GM12878 (cell line): ENCODE measurements at regions of chr12 and their contacts with region 1.

Region 1: GRCh38 chr12:26097046-26097878 is 27.6 kb downstream of the BHLHE41 start:
- DNase-seq: no peak
- ATAC-seq: peak; percentile 97
- H3K4me3 ChIP-seq: no peak overlapping the region
- H3K27ac ChIP-seq: no peak overlapping the region
- H3K4me1 ChIP-seq: no peaks in the 10 kb centered on the region
- H3K27me3 ChIP-seq: peaks cover 0 to 13% of the 10 kb centered on the region in 2 experiments; a peak in 2 of 4 replicates
- CTCF ChIP-seq: peak; percentile 93 to 94 (median 94)
- EP300 ChIP-seq: no peak
- POLR2A ChIP-seq: no peak
- RAD21 ChIP-seq: peak; percentile 91

Region 2: GRCh38 chr12:26113853-26114719 is 16.8 kb after region 1 on chr12:
- CTCF ChIA-PET with region 1: interaction called, 63 read pairs
- POLR2A ChIA-PET with region 1: interaction called, 3 read pairs
- RAD21 ChIA-PET with region 1: interaction called, 19 read pairs
- SMC1A ChIA-PET with region 1: interaction called, 29 read pairs
- in situ Hi-C with region 1: no loop called
- intact Hi-C with region 1: no loop called
- DNase-seq: no peak
- ATAC-seq: peak; percentile 95
- H3K4me3 ChIP-seq: peak overlapping the region; percentile 73; the same call in 1 of the 2 replicates
- H3K27ac ChIP-seq: no peak overlapping the region
- H3K4me1 ChIP-seq: peaks cover 17% of the 10 kb centered on the region
- H3K27me3 ChIP-seq: peaks cover 0 to 15% of the 10 kb centered on the region in 2 experiments; a peak in 1 of 4 replicates
- CTCF ChIP-seq: peak in 2 of 3 experiments; percentile 20 to 29; a peak in 3 of 6 replicates
- EP300 ChIP-seq: no peak
- POLR2A ChIP-seq: peak; percentile 68
- RAD21 ChIP-seq: no peak

Region 3: DNA sequence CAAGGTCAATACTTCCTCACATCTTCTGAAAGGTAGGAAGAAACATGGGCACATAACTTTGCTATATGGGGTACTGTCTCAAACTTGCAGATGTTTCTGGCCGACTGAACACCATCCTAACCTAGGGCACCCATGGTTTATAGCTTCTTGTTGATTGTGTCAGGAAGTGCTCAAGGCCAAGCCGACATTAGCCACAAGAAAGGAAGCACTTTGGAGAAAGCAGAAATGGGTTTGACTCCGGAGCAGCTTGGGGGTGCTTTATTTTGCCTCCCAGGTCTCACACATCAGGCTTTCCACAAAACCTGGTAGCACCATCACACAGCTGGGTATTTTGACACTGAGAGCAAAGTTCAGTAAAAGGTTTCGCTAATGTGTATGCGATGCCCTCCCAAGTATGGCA is 52.7 kb after region 1 on chr12:
- CTCF ChIA-PET with region 1: no interaction called
- POLR2A ChIA-PET with region 1: no interaction called
- RAD21 ChIA-PET with region 1: no interaction called
- SMC1A ChIA-PET with region 1: no interaction called
- in situ Hi-C with region 1: no loop called
- intact Hi-C with region 1: no loop called
- DNase-seq: no peak
- ATAC-seq: no peak
- H3K4me3 ChIP-seq: no peak overlapping the region
- H3K27ac ChIP-seq: no peak overlapping the region
- H3K4me1 ChIP-seq: peaks cover 5% of the 10 kb centered on the region; the same call in 1 of the 2 replicates
- H3K27me3 ChIP-seq: peaks cover 0 to 4% of the 10 kb centered on the region in 2 experiments; a peak in 1 of 4 replicates
- CTCF ChIP-seq: no peak
- EP300 ChIP-seq: no peak
- POLR2A ChIP-seq: no peak
- RAD21 ChIP-seq: no peak

Region 4: GRCh38 chr12:26523708-26524150 is 426.5 kb after region 1 on chr12:
- CTCF ChIA-PET with region 1: interaction called, 10 read pairs
- POLR2A ChIA-PET with region 1: no interaction called
- RAD21 ChIA-PET with region 1: no interaction called
- SMC1A ChIA-PET with region 1: interaction called, 5 read pairs
- in situ Hi-C with region 1: no loop called
- intact Hi-C with region 1: loop called (anchors 5 kb)
- DNase-seq: no peak
- ATAC-seq: no peak
- H3K4me3 ChIP-seq: no peak overlapping the region
- H3K27ac ChIP-seq: no peak overlapping the region
- H3K4me1 ChIP-seq: peaks cover 2% of the 10 kb centered on the region; the same call in 1 of the 2 replicates
- H3K27me3 ChIP-seq: no peaks in the 10 kb centered on the region
- CTCF ChIP-seq: no peak
- EP300 ChIP-seq: no peak
- POLR2A ChIP-seq: no peak
- RAD21 ChIP-seq: no peak

Region 5: GRCh38 chr12:26614020-26614616 is 516.9 kb after region 1 on chr12:
- CTCF ChIA-PET with region 1: interaction called, 13 read pairs
- POLR2A ChIA-PET with region 1: no interaction called
- RAD21 ChIA-PET with region 1: interaction called, 3 read pairs
- SMC1A ChIA-PET with region 1: interaction called, 5 read pairs
- in situ Hi-C with region 1: no loop called
- intact Hi-C with region 1: loop called (anchors 10 kb)
- DNase-seq: no peak
- ATAC-seq: peak; percentile 57
- H3K4me3 ChIP-seq: no peak overlapping the region
- H3K27ac ChIP-seq: no peak overlapping the region
- H3K4me1 ChIP-seq: no peaks in the 10 kb centered on the region
- H3K27me3 ChIP-seq: no peaks in the 10 kb centered on the region
- CTCF ChIP-seq: peak; percentile 42 to 52 (median 52)
- EP300 ChIP-seq: no peak
- POLR2A ChIP-seq: no peak
- RAD21 ChIP-seq: peak; percentile 46

Region 6: DNA sequence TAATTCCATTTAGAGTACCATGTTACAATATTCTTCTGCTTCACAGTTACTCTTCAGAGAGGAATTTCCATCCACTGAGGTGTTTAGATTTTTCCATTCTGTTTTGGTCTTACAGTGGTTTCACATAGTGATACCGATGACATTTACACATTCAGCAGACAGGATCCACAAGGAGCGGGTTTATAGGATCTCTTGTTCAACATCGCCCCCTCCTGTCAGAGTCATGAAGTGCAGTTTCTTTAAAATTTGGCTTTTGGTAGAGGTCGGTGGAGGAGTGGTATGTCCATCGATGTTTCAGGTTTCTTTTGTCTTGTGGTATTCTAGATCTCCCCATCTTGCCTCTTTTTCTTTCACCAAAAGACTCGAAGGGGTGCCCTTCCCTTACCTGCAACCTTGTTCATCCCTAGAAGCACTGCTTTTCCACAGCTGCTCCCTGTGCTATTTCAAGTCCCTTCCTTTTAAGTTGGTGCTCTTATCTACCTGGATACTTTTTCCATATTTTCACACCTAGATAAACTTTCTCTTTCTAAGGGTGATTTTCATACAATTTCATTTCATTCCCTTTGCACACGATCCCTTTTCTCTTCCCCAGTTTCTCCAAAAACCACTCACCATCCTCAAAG is 554.4 kb after region 1 on chr12:
- CTCF ChIA-PET with region 1: interaction called, 22 read pairs
- POLR2A ChIA-PET with region 1: no interaction called
- RAD21 ChIA-PET with region 1: interaction called, 6 read pairs
- SMC1A ChIA-PET with region 1: interaction called, 4 read pairs
- in situ Hi-C with region 1: loop called (anchors 25 kb)
- intact Hi-C with region 1: loop called (anchors 5 kb)
- DNase-seq: peak; percentile 21
- ATAC-seq: peak; percentile 84
- H3K4me3 ChIP-seq: no peak overlapping the region
- H3K27ac ChIP-seq: no peak overlapping the region
- H3K4me1 ChIP-seq: no peaks in the 10 kb centered on the region
- H3K27me3 ChIP-seq: no peaks in the 10 kb centered on the region
- CTCF ChIP-seq: peak; percentile 55 to 75 (median 73)
- EP300 ChIP-seq: no peak
- POLR2A ChIP-seq: no peak
- RAD21 ChIP-seq: peak; percentile 59